ENCODE measurements at regions of chr10 and their contacts with region 1.

Region 1: GRCh38 chr10:44310762-44311562 is 73.9 kb downstream of the CXCL12 start:
- DNase-seq: no peak
- H3K4me3 ChIP-seq: peak overlapping the region; percentile 19
- CTCF ChIP-seq: peak; percentile 80

Region 2: GRCh38 chr10:44056967-44057823 is 253.8 kb before region 1 on chr10:
- in situ Hi-C with region 1: no loop called
- DNase-seq: no peak
- H3K4me3 ChIP-seq: no peak overlapping the region
- CTCF ChIP-seq: no peak

Region 3: GRCh38 chr10:44352316-44353127 is 41.6 kb after region 1 on chr10:
- in situ Hi-C with region 1: no loop called
- DNase-seq: no peak
- H3K4me3 ChIP-seq: no peak overlapping the region
- CTCF ChIP-seq: no peak

Region 4: DNA sequence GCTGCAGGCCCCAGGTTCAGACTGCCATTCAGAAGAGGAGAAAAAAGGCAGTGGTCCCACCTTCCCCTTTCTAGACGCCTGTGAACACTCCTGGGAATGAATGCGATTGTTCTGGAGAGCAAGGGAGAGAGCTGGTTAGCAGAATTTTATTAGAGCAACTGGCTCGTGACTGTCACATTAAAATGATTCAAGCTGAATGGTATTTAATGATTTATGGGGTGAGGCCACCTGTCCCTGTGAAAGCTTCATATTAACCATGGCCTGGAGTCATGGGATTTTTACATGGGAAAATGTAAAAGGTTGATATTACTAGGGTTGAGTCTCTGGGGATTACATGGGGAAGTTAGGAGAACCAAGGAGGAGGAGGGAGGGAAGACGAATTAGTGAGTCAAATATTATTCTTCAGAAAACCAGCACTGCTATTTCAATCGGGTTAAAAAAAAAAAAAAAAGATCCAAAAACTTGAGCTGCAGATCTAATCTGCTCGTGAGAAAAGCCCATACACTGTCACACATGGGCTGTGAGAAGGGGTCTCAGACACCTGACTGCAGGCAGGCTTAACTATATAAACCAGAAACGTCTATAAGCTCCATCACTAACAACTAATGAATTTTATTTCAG is 65.6 kb after region 1 on chr10:
- in situ Hi-C with region 1: loop called (anchors 5 kb)
- DNase-seq: no peak
- H3K4me3 ChIP-seq: no peak overlapping the region
- CTCF ChIP-seq: no peak

Region 5: GRCh38 chr10:44864637-44865288 is 553.8 kb after region 1 on chr10:
- in situ Hi-C with region 1: loop called (anchors 25 kb)
- DNase-seq: peak; percentile 57
- H3K4me3 ChIP-seq: peak overlapping the region; percentile 51
- CTCF ChIP-seq: peak; percentile 94